Calu3 (cell line): ENCODE measurements at regions of chr5 and their contacts with region 1.

Region 1: GRCh38 chr5:109479260-109479860 is 69.6 kb upstream of the PJA2 start:
- DNase-seq: no peak
- H3K4me3 Mint-ChIP-seq: no peak overlapping the region
- H3K27ac Mint-ChIP-seq: no peak overlapping the region
- H3K4me1 Mint-ChIP-seq: no peaks in the 10 kb centered on the region
- H3K27me3 Mint-ChIP-seq: no peaks in the 10 kb centered on the region
- CTCF ChIP-seq: peak; percentile 29

Region 2: GRCh38 chr5:108345541-108346171 is 1133.7 kb before region 1 on chr5:
- CTCF ChIA-PET with region 1: no interaction called
- intact Hi-C with region 1: no loop called
- DNase-seq: no peak
- H3K4me3 Mint-ChIP-seq: no peak overlapping the region
- H3K27ac Mint-ChIP-seq: no peak overlapping the region
- H3K4me1 Mint-ChIP-seq: peaks cover 9% of the 10 kb centered on the region
- H3K27me3 Mint-ChIP-seq: no peaks in the 10 kb centered on the region
- CTCF ChIP-seq: no peak

Region 3: GRCh38 chr5:108521841-108522506 is 957.4 kb before region 1 on chr5:
- CTCF ChIA-PET with region 1: no interaction called
- intact Hi-C with region 1: loop called (anchors 1 kb)
- DNase-seq: peak; percentile 68
- H3K4me3 Mint-ChIP-seq: no peak overlapping the region
- H3K27ac Mint-ChIP-seq: no peak overlapping the region
- H3K4me1 Mint-ChIP-seq: no peaks in the 10 kb centered on the region
- H3K27me3 Mint-ChIP-seq: peaks cover 43% of the 10 kb centered on the region
- CTCF ChIP-seq: peak; percentile 68

Region 4: DNA sequence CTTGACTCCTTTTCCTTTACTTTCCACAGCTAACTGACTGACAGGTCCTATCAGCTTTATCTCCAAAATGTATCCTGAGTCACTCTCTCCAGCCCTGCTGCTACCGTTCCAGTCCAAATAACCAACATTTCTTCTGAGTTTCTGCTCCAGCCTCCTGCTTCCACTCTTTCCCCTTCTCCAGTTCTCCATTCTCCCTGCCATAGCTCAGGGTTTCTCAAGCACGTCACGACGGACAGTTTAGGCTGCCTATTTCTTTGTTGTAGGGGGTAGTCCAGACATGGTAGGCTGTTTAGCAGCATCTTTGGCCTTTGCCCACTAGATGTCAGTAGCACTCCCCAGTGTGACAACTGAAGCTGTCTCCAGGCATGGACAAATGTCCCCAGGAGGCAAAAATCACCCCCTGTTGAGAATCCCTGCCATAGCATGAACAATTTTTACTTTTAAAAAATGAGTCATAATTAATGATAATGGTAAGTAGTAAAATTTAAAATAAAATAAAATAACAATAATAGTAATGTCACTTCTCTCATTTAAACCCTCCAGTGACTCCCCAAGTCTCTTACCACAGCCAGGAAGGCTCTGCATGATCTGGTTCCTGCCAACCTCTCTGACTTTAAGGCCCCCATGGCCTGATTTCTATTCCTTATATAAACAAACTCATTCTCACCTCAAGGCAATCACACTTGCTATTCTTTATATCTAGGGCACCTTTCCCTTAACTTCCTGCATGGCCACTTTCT is 837.0 kb before region 1 on chr5:
- CTCF ChIA-PET with region 1: no interaction called
- intact Hi-C with region 1: loop called (anchors 2 kb)
- DNase-seq: peak; percentile 82
- H3K4me3 Mint-ChIP-seq: peak overlapping the region; percentile 31
- H3K27ac Mint-ChIP-seq: peak overlapping the region; percentile 30
- H3K4me1 Mint-ChIP-seq: peaks cover 17% of the 10 kb centered on the region
- H3K27me3 Mint-ChIP-seq: no peaks in the 10 kb centered on the region
- CTCF ChIP-seq: peak; percentile 93

Region 5: GRCh38 chr5:109099081-109099480 is 380.3 kb before region 1 on chr5:
- CTCF ChIA-PET with region 1: no interaction called
- intact Hi-C with region 1: loop called (anchors 10 kb)
- DNase-seq: no peak
- H3K4me3 Mint-ChIP-seq: no peak overlapping the region
- H3K27ac Mint-ChIP-seq: no peak overlapping the region
- H3K4me1 Mint-ChIP-seq: no peaks in the 10 kb centered on the region
- H3K27me3 Mint-ChIP-seq: no peaks in the 10 kb centered on the region
- CTCF ChIP-seq: no peak

Region 6: DNA sequence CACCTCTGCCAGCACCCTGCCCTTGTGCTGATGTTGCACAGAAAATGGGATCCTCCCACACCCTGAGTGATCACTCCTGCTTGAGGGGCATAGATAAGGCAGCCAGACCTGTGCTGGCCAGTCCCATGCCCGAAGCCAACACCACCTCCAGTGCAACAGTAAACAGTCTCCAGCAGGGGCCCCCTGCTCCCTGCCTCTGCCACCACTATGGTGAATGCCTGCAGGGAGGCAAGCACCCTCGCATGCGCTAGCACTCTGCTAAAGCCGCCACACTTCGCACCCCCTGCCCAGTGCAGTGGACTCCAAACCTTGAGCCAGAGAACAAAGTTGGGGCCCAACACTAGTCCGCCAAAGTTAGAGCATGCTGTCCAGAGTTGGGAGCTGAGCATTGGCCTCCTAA is 188.3 kb before region 1 on chr5:
- CTCF ChIA-PET with region 1: no interaction called
- intact Hi-C with region 1: no loop called
- DNase-seq: no peak
- H3K4me3 Mint-ChIP-seq: no peak overlapping the region
- H3K27ac Mint-ChIP-seq: no peak overlapping the region
- H3K4me1 Mint-ChIP-seq: peaks cover 21% of the 10 kb centered on the region
- H3K27me3 Mint-ChIP-seq: no peaks in the 10 kb centered on the region
- CTCF ChIP-seq: no peak

Region 7: GRCh38 chr5:109506556-109506955 is 27.2 kb after region 1 on chr5:
- CTCF ChIA-PET with region 1: no interaction called
- intact Hi-C with region 1: no loop called
- DNase-seq: no peak
- H3K4me3 Mint-ChIP-seq: no peak overlapping the region
- H3K27ac Mint-ChIP-seq: no peak overlapping the region
- H3K4me1 Mint-ChIP-seq: no peaks in the 10 kb centered on the region
- H3K27me3 Mint-ChIP-seq: no peaks in the 10 kb centered on the region
- CTCF ChIP-seq: no peak